ENCODE measurements at regions of chr15 and their contacts with region 1.

Region 1: DNA sequence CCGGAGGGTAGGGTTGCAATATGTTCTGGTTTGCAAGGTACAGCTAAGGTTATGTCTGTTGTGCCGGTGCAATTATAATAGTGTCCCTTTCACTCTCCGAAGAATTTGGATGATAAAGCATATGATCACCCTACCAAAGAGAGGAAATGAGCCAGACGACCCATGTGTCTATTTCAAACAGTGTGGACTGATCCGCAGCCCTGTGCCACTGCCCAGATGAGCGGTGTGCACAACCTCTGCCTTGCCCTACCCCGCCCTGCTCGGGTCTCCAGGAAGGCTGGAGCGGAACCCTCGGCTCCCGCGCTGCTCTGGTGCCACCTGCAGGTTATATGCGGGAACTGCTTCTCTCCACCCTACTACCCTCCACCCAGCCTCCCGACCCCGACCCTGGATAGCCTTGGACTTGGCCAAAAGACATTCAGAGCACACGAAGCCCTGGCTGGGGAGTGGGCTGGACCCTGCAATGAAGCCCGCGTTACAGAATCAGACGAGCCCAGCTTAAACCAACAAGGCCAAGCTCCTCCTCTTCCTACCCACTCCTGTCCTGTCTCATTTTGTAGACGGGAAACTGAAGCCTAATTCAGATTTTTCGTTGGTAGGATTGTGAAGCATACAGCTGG is 68.4 kb upstream of the CHRNB4 start:
- DNase-seq: peak; percentile 7
- ATAC-seq: peak; percentile 100
- H3K4me3 ChIP-seq: no peak overlapping the region
- H3K27ac ChIP-seq: no peak overlapping the region
- H3K4me1 ChIP-seq: no peaks in the 10 kb centered on the region; the same call in 1 of the 2 replicates
- H3K27me3 ChIP-seq: peaks cover 21% of the 10 kb centered on the region
- CTCF ChIP-seq: peak; percentile 77
- POLR2A ChIP-seq: no peak
- RAD21 ChIP-seq: peak; percentile 79

Region 2: DNA sequence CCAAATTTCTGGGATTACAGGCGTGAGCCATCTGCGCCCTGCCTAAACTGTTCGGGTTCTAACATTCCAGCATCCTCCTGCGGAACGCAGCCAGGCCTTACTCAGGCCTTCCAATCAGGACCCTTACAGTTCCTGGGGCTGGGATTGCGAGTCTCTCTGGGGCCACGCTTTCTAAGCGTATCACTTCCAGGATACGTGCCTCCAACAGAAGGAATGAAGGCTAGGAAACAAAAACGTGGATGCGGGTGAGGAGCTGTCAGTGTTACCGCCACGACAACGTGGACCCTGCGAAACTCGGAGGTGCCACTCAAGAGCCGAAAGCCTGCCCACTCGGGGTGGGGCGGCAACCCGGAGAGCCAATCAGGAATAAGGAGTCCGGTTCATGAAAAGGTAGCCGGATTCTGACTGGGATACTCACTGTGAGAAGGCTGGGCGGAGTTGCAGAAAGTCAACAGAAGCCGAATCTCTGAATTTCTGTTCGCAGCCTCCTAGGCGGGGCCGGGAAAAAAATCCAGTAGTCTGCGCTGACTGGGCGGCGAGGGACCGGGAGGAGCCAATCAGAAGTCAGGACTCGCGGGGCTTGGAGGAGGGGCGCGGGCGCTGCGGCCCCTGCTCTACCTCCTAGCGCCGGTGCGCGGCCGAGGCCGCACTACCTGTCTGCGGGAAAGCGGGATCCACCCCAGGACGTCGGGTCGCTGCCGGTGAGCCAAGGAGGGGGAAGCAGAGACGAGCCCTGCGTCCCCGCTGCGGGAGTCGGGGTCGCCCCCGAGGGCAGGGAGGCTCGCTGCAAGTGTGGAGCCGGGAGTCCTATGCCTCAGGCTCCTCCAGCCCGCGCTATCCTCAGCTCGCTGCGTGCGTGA is 202.2 kb before region 1 on chr15 and contains the start of gene HYKK:
- CTCF ChIA-PET with region 1: no interaction called
- POLR2A ChIA-PET with region 1: no interaction called
- dilution Hi-C with region 1: no loop called
- in situ Hi-C with region 1: no loop called
- intact Hi-C with region 1: loop called (anchors 10 kb)
- DNase-seq: peak; percentile 96
- ATAC-seq: peak; percentile 95
- H3K4me3 ChIP-seq: peak within 1 kb of the TSS; percentile 67
- H3K27ac ChIP-seq: no peak within 1 kb of the TSS; the same call in 1 of the 2 replicates
- H3K4me1 ChIP-seq: no peaks in the 10 kb centered on the region
- H3K27me3 ChIP-seq: no peaks in the 10 kb centered on the region
- CTCF ChIP-seq: no peak
- POLR2A ChIP-seq: no peak
- RAD21 ChIP-seq: no peak
- total RNA-seq, gene HYKK: 3.9 and 5.6 TPM in 2 replicates

Region 3: DNA sequence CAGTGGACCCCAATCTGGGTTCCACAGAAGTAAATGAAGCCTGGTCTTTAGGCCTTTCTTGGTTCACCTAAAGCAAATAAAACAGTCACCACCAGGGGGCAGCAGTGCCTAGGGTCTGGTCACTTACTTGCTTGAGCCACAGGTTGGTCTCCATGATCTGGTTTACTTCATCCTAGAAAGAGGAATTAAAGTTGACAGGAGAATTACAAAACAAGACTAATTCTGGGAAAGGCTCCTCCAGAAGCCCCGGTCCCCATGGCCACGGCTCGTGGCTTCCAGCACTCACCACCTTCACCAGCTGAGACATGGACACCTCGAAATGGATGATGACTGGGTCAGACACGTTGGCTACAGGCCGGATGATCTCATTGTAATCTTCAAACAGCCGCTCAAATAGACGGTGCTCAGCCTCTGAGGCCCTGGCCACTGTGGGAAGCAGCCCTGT is 90.9 kb before region 1 on chr15:
- CTCF ChIA-PET with region 1: interaction called, 4 read pairs
- POLR2A ChIA-PET with region 1: no interaction called
- dilution Hi-C with region 1: no loop called
- in situ Hi-C with region 1: loop called (anchors 5 kb)
- intact Hi-C with region 1: loop called (anchors 1 kb)
- DNase-seq: peak; percentile 81
- ATAC-seq: peak; percentile 90
- H3K4me3 ChIP-seq: no peak overlapping the region
- H3K27ac ChIP-seq: no peak overlapping the region
- H3K4me1 ChIP-seq: no peaks in the 10 kb centered on the region
- H3K27me3 ChIP-seq: peaks cover 39% of the 10 kb centered on the region
- CTCF ChIP-seq: peak; percentile 81
- POLR2A ChIP-seq: no peak
- RAD21 ChIP-seq: peak; percentile 85

Region 4: GRCh38 chr15:78638658-78639314 is 70.6 kb before region 1 on chr15:
- CTCF ChIA-PET with region 1: interaction called, 3 read pairs
- POLR2A ChIA-PET with region 1: no interaction called
- dilution Hi-C with region 1: no loop called
- in situ Hi-C with region 1: no loop called
- intact Hi-C with region 1: loop called (anchors 1 kb)
- DNase-seq: peak; percentile 19
- ATAC-seq: peak; percentile 76
- H3K4me3 ChIP-seq: no peak overlapping the region
- H3K27ac ChIP-seq: no peak overlapping the region
- H3K4me1 ChIP-seq: no peaks in the 10 kb centered on the region
- H3K27me3 ChIP-seq: peaks cover 50% of the 10 kb centered on the region
- CTCF ChIP-seq: peak; percentile 59
- POLR2A ChIP-seq: no peak
- RAD21 ChIP-seq: peak; percentile 58

Region 5: DNA sequence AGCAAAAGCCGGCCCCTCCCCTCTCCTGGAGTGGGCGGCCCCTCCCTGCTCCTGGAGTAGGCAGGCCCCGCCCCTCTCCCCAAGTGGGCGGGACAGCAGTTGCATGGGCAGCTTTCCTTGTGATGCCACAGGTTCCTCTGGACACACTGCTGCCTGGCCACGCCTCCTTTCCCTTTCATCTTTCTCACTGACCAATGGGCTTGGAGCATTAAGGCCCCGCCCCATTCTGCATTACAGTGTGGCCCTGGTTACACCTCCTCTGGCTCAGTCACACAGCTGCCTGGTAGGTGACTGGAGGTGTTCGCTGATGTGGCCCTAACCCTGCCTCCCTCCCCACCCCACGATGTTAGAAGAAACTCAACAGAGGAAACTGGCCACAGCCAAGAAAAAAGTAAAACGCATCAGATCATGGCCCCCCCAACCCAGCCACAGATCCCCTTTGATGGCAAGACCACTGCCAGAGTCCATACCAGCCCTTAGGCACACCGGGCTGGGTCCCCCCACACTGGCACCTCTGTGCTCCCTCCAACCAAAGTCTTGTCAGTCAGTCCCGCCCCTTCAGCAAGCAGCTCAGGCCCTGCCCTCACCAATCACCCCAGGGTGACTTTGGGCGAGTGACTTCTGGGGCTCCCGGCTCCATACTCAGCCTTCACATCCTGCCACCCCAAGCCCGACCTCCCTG is 17.6 kb after region 1 on chr15:
- CTCF ChIA-PET with region 1: no interaction called
- POLR2A ChIA-PET with region 1: no interaction called
- dilution Hi-C with region 1: no loop called
- in situ Hi-C with region 1: no loop called
- intact Hi-C with region 1: no loop called
- DNase-seq: no peak
- ATAC-seq: no peak
- H3K4me3 ChIP-seq: no peak overlapping the region
- H3K27ac ChIP-seq: no peak overlapping the region
- H3K4me1 ChIP-seq: no peaks in the 10 kb centered on the region
- H3K27me3 ChIP-seq: peaks cover 17% of the 10 kb centered on the region
- CTCF ChIP-seq: no peak
- POLR2A ChIP-seq: no peak
- RAD21 ChIP-seq: no peak

Measured in IMR-90 (cell line).